ENCODE measurements at regions of chr15 and their contacts with region 1.

Region 1: DNA sequence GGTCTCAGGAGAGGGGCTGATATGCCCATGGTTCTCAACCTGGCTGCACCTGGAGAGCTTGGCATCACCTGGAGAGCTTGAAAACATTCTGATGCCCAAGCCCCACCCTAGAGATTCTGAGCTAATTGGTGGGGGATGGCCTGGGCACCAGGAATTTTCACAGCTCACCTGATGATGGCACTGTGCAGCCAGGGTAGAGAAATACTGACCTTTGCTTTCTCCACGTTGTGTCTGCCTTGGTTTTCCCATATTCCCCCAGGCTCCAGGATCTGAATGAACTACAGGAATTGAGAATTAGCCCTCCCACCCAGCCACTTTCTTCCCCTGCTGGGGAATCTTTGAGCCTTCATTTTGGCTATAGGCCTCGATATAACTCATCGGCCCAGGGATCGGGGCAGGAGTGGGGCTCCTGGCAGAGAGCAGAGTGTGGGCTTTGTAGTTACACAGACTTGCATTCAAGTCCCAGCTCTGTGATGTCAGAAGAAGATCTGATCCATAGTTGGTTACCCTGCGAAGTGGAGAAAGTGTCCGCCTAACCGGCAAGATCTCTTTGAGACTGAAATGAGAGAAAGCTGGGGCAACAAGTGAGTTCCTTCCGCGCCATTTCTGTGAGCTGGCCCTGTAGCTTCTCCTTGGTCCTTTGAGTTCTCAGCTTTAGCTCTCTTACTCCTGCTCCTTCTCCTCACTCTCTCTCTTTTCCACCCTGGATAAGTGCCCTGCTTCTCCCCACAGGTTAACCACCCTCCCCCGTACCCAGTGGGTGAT is 33.1 kb upstream of the UBE2Q2 start:
- DNase-seq: peak; percentile 37
- ATAC-seq: peak; percentile 58
- H3K4me3 Mint-ChIP-seq: no peak overlapping the region
- H3K27ac Mint-ChIP-seq: no peak overlapping the region
- H3K4me1 Mint-ChIP-seq: peaks cover 4% of the 10 kb centered on the region
- H3K27me3 Mint-ChIP-seq: peaks cover 7% of the 10 kb centered on the region
- CTCF ChIP-seq: no peak

Region 2: DNA sequence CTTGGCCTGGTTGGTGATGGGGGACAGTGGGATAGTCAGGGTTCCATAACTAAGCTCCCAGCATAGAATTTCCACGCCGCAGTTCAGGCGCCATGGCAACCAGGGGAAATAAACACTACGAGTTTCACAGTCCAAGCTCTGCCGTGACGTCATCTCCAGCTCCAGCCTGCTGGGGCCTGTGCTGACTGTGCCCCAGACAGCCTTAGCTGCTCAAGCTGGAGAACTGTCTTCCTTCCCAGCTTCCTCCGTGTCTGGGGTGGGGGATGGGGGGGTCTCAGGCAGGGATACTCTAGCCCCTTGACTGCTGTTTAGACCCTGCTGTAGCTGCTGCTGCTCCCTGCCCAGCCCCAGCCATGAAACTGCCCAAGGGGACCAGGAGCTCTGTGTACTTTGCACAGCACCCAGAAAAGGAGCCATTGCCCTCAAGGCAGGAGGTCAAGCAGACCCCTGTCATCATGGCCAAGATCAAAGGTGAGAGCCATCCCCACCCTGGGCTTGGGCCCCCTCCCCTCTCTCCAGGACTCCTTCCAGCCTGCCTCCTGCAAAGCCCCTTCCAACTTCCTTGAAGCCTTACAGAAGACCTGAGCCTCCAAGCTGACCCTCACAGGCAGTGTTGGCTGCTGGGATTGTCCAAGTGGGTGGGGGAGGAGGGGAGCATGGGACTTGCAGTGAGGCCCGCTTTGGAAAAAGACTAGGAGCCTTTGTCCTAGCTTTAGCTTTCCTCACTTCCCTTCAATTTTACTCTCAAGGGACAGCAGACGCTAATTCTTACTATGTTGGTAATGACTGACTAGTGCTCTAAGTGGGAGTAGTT is 86.1 kb before region 1 on chr15:
- CTCF ChIA-PET with region 1: interaction called, 10 read pairs
- POLR2A ChIA-PET with region 1: no interaction called
- intact Hi-C with region 1: no loop called
- DNase-seq: peak; percentile 63
- ATAC-seq: peak; percentile 26
- H3K4me3 Mint-ChIP-seq: no peak overlapping the region
- H3K27ac Mint-ChIP-seq: no peak overlapping the region
- H3K4me1 Mint-ChIP-seq: peaks cover 8% of the 10 kb centered on the region
- H3K27me3 Mint-ChIP-seq: peaks cover 20% of the 10 kb centered on the region
- CTCF ChIP-seq: no peak

Region 3: GRCh38 chr15:75869446-75869845 is 59.3 kb after region 1 on chr15:
- CTCF ChIA-PET with region 1: no interaction called
- POLR2A ChIA-PET with region 1: no interaction called
- intact Hi-C with region 1: no loop called
- DNase-seq: no peak
- ATAC-seq: no peak
- H3K4me3 Mint-ChIP-seq: no peak overlapping the region
- H3K27ac Mint-ChIP-seq: no peak overlapping the region
- H3K4me1 Mint-ChIP-seq: peaks cover 15% of the 10 kb centered on the region
- H3K27me3 Mint-ChIP-seq: no peaks in the 10 kb centered on the region
- CTCF ChIP-seq: no peak

Region 4: DNA sequence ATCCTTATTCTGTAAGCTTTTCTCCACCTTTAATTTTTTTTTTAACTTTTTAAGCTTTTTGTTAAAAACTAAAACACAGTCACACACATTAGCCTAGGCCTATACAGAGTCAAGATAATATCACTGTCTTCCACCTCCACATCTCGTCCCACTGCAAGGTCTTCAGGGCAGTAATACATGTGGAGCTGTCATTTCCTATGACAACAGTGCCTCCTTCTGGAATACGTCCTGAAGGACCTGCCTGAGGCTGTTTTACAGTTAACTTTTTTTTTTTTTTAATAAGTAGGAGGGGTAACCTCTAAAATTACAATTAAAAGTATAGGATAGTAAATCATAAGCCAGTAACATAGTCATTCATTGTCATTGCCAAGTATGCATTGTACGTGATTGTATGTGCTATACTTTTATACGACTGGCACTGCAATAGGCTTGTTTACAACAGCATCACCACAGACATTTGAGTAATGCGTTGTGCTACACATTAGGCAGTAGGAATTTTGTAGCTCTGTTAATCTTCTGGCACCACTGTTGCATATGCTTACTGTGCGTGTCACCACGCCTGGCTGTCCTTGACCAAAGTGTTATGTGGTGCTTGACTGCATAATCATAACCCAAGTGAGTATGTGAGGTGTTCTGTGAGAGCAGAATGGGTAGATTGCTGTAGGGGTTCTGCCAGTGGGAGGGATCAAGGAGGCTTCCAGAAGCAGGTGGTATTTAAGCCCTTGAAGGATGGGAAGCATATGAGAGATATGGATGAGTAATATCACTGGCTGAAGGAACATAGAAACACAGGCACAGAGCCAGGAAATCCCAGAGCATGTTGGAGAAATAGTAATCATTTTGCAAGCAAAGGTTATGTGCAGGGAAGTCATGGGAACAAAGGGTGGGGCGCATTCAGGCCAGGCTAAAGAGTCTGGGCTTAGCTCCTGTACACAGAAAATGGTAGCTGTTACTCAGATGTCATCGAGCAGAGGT is 111.8 kb after region 1 on chr15:
- CTCF ChIA-PET with region 1: interaction called, 16 read pairs
- POLR2A ChIA-PET with region 1: no interaction called
- intact Hi-C with region 1: no loop called
- DNase-seq: peak; percentile 19
- ATAC-seq: no peak
- H3K4me3 Mint-ChIP-seq: no peak overlapping the region
- H3K27ac Mint-ChIP-seq: no peak overlapping the region
- H3K4me1 Mint-ChIP-seq: peaks cover 27% of the 10 kb centered on the region
- H3K27me3 Mint-ChIP-seq: no peaks in the 10 kb centered on the region
- CTCF ChIP-seq: no peak